ENCODE measurements at regions of chr18 and their contacts with region 1.

Region 1: DNA sequence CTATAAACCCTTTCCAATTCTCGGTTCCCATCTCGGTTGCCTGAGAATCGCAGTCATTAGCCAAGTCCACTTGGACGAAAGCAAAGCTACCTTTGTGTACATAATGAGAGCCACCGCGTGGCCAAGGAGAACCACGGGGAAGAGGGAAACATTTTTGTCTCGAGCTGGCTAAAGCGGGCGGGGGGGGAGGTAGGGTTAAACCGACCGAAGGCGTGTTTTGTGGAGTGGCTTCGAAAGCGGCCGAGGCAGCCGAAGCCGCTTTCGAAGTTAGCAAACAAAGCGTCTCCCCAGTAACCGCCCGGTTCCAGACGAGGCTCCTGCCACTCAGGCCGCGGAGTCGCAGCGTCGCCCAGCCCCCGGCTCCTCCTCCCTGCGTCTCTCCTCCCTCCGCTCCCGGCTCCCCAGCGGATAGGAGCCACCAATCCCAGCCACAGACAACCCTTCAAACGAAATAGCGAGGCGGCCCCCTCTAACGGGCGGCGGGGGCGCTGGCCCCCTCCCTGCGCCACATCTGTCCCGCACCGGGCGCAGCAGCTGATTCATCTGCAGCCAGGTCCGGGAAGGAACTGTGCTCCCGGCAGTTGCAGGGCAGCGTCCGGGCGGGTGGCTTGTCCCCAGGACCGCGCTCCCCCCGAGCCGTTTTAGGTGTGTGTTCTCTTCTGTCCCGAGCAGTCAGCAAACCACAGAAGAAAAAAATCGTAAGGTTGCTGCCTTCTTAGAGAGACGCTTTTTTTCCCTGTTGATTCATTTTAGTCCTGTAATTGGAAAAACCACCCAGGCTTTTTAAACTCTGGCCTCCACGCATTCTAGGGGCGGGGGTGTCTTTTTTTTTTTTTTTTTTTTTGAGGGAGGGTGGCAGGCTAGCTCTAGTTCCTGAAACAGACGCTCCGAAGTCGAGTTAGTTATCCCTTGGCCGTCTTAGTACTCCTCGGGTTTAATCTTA is 1.8 kb upstream of the TGIF1 start:
- DNase-seq: peak; percentile 56 to 95
- ATAC-seq: peak; percentile 76 to 80
- H3K4me3 ChIP-seq: peak overlapping the region; percentile 93
- H3K27ac ChIP-seq: peak overlapping the region; percentile 98 to 100
- H3K4me1 ChIP-seq: peaks cover 25% of the 10 kb centered on the region
- CTCF ChIP-seq: peak; percentile 19; the same call in 1 of the 3 replicates
- EP300 ChIP-seq: peak in 1 of 2 experiments; percentile 27; a peak in 1 of 5 replicates
- POLR2A ChIP-seq: peak; percentile 57
- RAD21 ChIP-seq: peak in 1 of 2 experiments; percentile 31; a peak in 2 of 5 replicates

Region 2: GRCh38 chr18:3368193-3368592 is 80.0 kb before region 1 on chr18:
- CTCF ChIA-PET with region 1: no interaction called
- POLR2A ChIA-PET with region 1: interaction called, 12 read pairs
- DNase-seq: no peak
- ATAC-seq: no peak; a peak in 1 of 6 replicates
- H3K4me3 ChIP-seq: no peak overlapping the region
- H3K27ac ChIP-seq: peak overlapping the region; percentile 62 to 78; a peak in 5 of 6 replicates
- H3K4me1 ChIP-seq: peaks cover 14% of the 10 kb centered on the region; the same call in 2 of the 3 replicates
- CTCF ChIP-seq: no peak
- EP300 ChIP-seq: peak in 1 of 2 experiments; percentile 56; a peak in 2 of 5 replicates
- POLR2A ChIP-seq: no peak
- RAD21 ChIP-seq: no peak

Region 3: DNA sequence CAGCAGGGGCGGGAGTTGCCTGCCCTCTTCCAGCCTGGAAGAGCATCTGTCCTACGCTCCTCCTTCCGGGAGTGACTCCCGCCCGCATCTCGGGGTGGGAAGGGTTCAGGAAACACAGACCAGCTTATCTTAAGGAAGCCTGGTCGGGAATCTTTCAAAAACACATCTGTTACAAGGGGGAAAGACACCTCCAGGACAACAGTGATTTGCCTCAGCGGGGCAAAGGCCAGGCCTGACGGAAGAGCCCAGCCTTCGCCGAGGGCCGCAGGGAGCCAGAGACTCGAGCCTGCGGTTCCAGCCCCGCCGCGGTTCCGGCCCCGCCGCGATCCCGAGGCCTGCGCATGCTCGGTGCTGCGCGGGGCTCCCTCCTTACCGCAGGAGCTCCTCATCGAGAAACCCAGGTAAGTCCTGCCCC is 36.3 kb before region 1 on chr18:
- CTCF ChIA-PET with region 1: no interaction called
- POLR2A ChIA-PET with region 1: interaction called, 36 read pairs
- DNase-seq: peak; percentile 54 to 80
- ATAC-seq: peak; percentile 81 to 88
- H3K4me3 ChIP-seq: peak overlapping the region; percentile 54
- H3K27ac ChIP-seq: peak overlapping the region; percentile 85 to 94
- H3K4me1 ChIP-seq: peaks cover 41% of the 10 kb centered on the region
- CTCF ChIP-seq: no peak
- EP300 ChIP-seq: no peak
- POLR2A ChIP-seq: no peak
- RAD21 ChIP-seq: no peak

Region 4: GRCh38 chr18:3541549-3542386 is 93.6 kb after region 1 on chr18:
- CTCF ChIA-PET with region 1: no interaction called
- POLR2A ChIA-PET with region 1: no interaction called
- DNase-seq: no peak
- ATAC-seq: no peak
- H3K4me3 ChIP-seq: no peak overlapping the region
- H3K27ac ChIP-seq: no peak overlapping the region
- H3K4me1 ChIP-seq: peaks cover 7% of the 10 kb centered on the region; the same call in 1 of the 3 replicates
- CTCF ChIP-seq: no peak
- EP300 ChIP-seq: no peak
- POLR2A ChIP-seq: no peak
- RAD21 ChIP-seq: no peak

Measured in A549 (cell line).